ENCODE measurements at regions of chr3 and their contacts with region 1.

Region 1: DNA sequence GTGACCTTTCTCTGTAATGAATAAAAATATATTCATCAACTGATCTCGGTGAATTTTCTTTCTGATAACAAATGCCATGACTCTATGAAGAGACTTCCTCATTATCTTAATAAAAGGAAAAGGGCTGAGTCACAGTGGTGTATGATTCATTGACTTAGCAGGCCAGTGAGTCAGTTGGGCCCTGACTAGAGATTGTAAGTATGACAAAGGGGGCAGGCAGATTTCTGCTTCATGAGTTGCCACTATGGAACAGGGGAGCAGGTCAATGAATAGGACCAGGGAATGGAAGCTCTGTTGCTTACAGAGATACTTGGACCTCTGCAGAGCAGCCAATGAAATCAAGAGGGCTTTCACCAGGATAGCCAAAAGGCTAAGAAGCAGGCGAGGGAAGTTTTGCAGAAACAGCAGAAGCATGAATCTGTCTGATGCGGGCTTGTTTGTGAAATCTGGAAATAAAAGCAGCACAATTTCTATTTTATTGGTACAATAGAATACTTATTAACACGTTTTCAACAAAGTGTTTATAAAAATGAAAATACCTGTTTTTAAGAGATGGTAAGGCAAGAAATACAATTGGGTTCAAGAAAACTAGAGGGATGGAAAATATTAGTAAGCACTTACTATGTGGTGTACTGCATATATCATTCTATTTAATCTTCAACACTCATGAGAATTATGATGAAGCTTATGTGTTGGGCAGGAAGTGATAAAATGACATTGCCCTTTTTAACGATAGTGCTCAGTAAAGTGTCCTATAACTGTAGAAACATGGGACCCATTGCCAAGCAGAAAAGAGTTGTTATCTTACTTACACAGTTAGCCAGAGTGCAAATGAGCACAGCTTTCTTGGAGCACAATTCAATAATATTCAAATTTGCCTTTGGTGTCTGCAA is 169.8 kb upstream of the MYRIP start:
- DNase-seq: peak; percentile 95
- H3K4me3 ChIP-seq: peak overlapping the region in 1 of 3 experiments; percentile 21
- H3K27ac ChIP-seq: peak overlapping the region; percentile 97
- H3K4me1 ChIP-seq: peaks cover 32% of the 10 kb centered on the region
- H3K27me3 ChIP-seq: no peaks in the 10 kb centered on the region
- CTCF ChIP-seq: no peak
- POLR2A ChIP-seq: no peak

Region 2: GRCh38 chr3:39456159-39456558 is 183.4 kb before region 1 on chr3:
- CTCF ChIA-PET with region 1: no interaction called
- POLR2A ChIA-PET with region 1: no interaction called
- dilution Hi-C with region 1: no loop called
- intact Hi-C with region 1: no loop called
- DNase-seq: no peak
- H3K4me3 ChIP-seq: no peak overlapping the region
- H3K27ac ChIP-seq: no peak overlapping the region
- H3K4me1 ChIP-seq: no peaks in the 10 kb centered on the region
- H3K27me3 ChIP-seq: peaks cover 5 to 7% of the 10 kb centered on the region in 2 experiments
- CTCF ChIP-seq: no peak
- POLR2A ChIP-seq: no peak

Region 3: GRCh38 chr3:39541917-39542329 is 97.7 kb before region 1 on chr3:
- CTCF ChIA-PET with region 1: interaction called, 16 read pairs
- POLR2A ChIA-PET with region 1: no interaction called
- dilution Hi-C with region 1: no loop called
- intact Hi-C with region 1: no loop called
- DNase-seq: peak; percentile 79
- H3K4me3 ChIP-seq: peak overlapping the region in 1 of 3 experiments; percentile 40
- H3K27ac ChIP-seq: peak overlapping the region; percentile 10
- H3K4me1 ChIP-seq: peaks cover 9% of the 10 kb centered on the region
- H3K27me3 ChIP-seq: no peaks in the 10 kb centered on the region
- CTCF ChIP-seq: peak; percentile 40 to 49
- POLR2A ChIP-seq: no peak

Region 4: GRCh38 chr3:39605837-39606236 is 33.8 kb before region 1 on chr3:
- CTCF ChIA-PET with region 1: no interaction called
- POLR2A ChIA-PET with region 1: no interaction called
- dilution Hi-C with region 1: no loop called
- intact Hi-C with region 1: no loop called
- DNase-seq: no peak
- H3K4me3 ChIP-seq: no peak overlapping the region
- H3K27ac ChIP-seq: no peak overlapping the region
- H3K4me1 ChIP-seq: no peaks in the 10 kb centered on the region
- H3K27me3 ChIP-seq: no peaks in the 10 kb centered on the region
- CTCF ChIP-seq: no peak
- POLR2A ChIP-seq: no peak

Region 5: GRCh38 chr3:39668420-39668819 is 28.8 kb after region 1 on chr3:
- CTCF ChIA-PET with region 1: interaction called, 7 read pairs
- POLR2A ChIA-PET with region 1: no interaction called
- dilution Hi-C with region 1: no loop called
- intact Hi-C with region 1: loop called (anchors 1 kb)
- DNase-seq: peak; percentile 60
- H3K4me3 ChIP-seq: no peak overlapping the region
- H3K27ac ChIP-seq: no peak overlapping the region
- H3K4me1 ChIP-seq: no peaks in the 10 kb centered on the region
- H3K27me3 ChIP-seq: no peaks in the 10 kb centered on the region
- CTCF ChIP-seq: peak; percentile 67 to 71
- POLR2A ChIP-seq: no peak

Region 6: DNA sequence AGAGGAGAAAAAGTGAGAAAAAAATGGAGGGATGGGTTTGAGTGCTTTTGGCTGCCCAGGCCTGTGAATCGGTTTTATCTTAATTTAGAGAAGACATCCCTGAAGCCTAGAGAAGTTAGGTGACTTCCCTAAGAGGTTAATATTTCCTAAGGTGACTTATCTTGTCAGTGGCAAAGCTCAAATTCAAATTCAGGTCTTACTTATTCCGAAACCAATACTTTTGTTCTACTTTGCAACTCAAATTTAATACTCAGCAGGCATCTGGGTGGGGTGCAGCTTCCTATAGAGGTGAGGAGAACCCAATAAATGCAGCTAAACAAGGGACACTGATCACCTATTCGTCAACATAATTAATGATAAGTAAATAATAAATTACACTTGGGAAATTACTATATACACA is 115.0 kb after region 1 on chr3:
- CTCF ChIA-PET with region 1: no interaction called
- POLR2A ChIA-PET with region 1: no interaction called
- dilution Hi-C with region 1: no loop called
- intact Hi-C with region 1: loop called (anchors 1 kb)
- DNase-seq: no peak
- H3K4me3 ChIP-seq: no peak overlapping the region
- H3K27ac ChIP-seq: no peak overlapping the region
- H3K4me1 ChIP-seq: peaks cover 61% of the 10 kb centered on the region
- H3K27me3 ChIP-seq: no peaks in the 10 kb centered on the region
- CTCF ChIP-seq: no peak
- POLR2A ChIP-seq: no peak

Region 7: DNA sequence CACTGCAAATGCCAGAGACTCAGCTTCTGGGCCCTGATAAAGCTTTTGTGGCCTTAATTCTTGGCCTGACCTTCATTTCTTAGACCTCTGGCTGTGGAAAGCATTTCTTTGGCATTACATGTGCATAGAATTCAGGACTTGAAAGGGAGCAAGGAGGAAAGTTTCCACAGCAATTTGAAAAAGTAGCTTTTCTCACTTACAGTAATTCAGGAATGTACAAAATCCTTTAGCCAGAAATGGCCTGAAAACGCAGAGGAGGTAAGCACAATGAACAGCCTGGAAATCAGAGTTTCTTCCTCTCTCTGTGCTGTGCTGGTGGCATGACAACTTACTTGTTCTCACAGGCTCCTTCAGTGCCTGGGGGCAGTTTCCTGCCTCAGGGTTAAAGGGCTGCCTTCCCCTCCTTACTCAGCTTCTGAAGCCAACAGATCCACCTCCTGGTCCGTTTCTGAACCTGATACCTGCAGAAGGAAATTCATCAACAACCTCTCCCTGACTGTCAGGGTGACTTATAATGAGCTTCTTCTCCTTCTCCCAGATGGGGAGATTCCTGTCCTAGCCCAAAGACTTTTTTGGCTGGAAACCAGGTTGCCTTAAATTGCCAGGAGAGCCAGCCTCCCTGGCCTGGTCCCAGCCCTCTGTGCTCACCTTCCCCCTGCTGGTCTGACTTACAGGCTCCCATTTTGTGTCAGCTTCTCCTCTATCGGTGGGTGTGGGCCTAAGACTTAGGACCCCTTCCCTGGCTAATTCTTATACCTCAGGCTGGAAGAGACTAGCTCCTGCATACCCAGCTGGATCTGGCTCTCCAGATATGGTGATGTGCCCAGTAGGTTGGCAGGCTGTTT is 272.1 kb after region 1 on chr3:
- CTCF ChIA-PET with region 1: no interaction called
- POLR2A ChIA-PET with region 1: no interaction called
- dilution Hi-C with region 1: no loop called
- intact Hi-C with region 1: loop called (anchors 2 kb)
- DNase-seq: peak; percentile 97
- H3K4me3 ChIP-seq: no peak overlapping the region
- H3K27ac ChIP-seq: peak overlapping the region; percentile 67
- H3K4me1 ChIP-seq: peaks cover 48% of the 10 kb centered on the region
- H3K27me3 ChIP-seq: no peaks in the 10 kb centered on the region
- CTCF ChIP-seq: peak in 1 of 2 donors; percentile 44
- POLR2A ChIP-seq: no peak

Region 8: GRCh38 chr3:39965997-39966396 is 326.4 kb after region 1 on chr3:
- CTCF ChIA-PET with region 1: no interaction called
- POLR2A ChIA-PET with region 1: no interaction called
- dilution Hi-C with region 1: no loop called
- intact Hi-C with region 1: no loop called
- DNase-seq: no peak
- H3K4me3 ChIP-seq: no peak overlapping the region
- H3K27ac ChIP-seq: no peak overlapping the region
- H3K4me1 ChIP-seq: peaks cover 2% of the 10 kb centered on the region
- H3K27me3 ChIP-seq: no peaks in the 10 kb centered on the region
- CTCF ChIP-seq: no peak
- POLR2A ChIP-seq: no peak

Region 9: DNA sequence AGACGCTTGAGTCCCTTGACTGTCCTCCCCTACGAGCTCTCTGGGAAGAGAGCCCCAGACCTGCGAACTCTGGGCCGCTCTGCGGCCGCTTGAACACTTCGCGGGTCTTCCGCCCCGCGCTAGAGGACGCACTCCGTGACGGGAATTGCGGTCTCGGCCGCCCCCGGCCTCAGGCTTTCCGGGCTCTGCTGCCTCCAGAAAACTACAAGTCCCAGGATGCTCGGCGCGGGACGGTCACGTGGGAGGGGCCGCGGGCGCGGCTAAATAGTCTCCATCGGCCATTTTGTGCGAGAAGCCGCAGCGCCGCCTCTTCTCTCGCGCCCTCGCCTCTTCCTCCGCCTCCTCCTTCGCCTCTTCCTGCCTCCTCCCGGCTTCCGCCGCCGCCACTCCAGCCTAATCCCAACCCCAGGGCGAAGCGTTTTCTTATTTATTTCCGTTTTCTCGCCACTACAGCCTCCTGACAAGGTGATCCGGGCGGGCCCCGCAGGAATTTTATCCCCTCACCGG is 669.9 kb after region 1 on chr3 and contains the start of gene EIF1B:
- CTCF ChIA-PET with region 1: interaction called, 7 read pairs
- POLR2A ChIA-PET with region 1: no interaction called
- dilution Hi-C with region 1: no loop called
- intact Hi-C with region 1: loop called (anchors 1 kb)
- DNase-seq: peak; percentile 99
- H3K4me3 ChIP-seq: peak within 1 kb of the TSS; percentile 85 to 100 (median 98)
- H3K27ac ChIP-seq: peak within 1 kb of the TSS; percentile 93
- H3K4me1 ChIP-seq: peaks cover 14% of the 10 kb centered on the region
- H3K27me3 ChIP-seq: no peaks in the 10 kb centered on the region
- CTCF ChIP-seq: peak; percentile 96 to 97
- POLR2A ChIP-seq: peak; percentile 96
- total RNA-seq, gene EIF1B: 44.1 and 46.0 TPM in 2 replicates

Region 10: DNA sequence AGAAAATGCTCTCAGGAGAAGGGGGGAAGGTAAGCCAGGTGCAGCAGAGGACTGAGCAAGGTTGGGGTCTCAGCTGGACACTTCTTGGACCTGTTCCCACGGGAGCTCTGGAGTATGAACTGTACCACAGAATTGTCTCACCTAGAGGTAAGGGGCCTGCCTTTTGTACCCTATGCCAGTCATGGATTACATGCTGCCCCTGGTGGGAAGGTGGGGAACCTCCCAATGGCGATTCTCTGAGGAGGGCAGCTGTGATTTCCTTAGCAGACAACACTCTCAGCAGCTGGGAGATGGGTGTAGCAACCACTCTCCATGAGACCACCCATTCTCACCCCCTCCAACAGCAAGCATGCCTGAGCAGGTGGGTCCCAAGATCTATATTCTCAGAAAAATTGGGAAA is 1230.3 kb after region 1 on chr3:
- CTCF ChIA-PET with region 1: no interaction called
- POLR2A ChIA-PET with region 1: no interaction called
- dilution Hi-C with region 1: no loop called
- intact Hi-C with region 1: no loop called
- DNase-seq: no peak
- H3K4me3 ChIP-seq: no peak overlapping the region
- H3K27ac ChIP-seq: no peak overlapping the region
- H3K4me1 ChIP-seq: no peaks in the 10 kb centered on the region
- H3K27me3 ChIP-seq: peaks cover 0 to 9% of the 10 kb centered on the region in 2 experiments
- CTCF ChIP-seq: peak in 1 of 2 donors; percentile 7
- POLR2A ChIP-seq: no peak

Measured in endothelial cell of umbilical vein (primary cell).